ENCODE measurements at regions of chr11 and their contacts with region 1.

Region 1: DNA sequence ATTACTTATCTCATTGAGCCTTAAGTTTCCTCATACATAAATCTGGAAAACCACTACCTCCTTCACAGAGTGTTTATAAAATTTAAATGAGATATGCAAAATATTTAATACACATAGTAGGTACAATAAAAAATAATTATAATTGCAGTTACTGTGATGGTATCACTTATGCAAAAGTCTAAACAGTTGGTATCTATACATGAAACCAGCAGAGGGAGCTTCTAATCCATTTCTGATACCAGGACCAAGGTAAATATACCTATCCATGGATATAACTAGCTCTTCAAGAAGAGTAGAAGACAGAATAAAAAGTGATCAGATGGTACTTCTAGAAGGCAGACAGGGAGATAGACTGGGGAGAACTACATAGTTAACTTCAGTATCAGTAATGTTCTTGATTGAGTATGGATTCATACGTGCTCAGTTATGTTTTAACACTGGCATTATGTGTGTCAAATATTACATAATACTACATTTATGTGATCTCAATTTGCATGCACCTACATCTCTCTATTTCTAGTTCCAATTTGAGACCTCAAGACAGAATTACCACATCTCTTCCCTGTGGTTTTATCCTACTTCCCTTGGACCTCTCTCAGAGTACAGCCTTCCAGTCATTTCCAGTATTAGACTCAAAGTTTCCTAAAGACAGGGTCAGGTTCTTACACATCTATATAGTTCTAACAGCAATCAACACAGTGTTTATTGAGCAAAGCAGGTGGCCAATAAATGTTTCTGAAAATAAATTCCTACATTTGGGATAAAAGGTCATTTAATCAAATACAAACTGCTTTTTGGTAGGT is 13.7 kb upstream of the TSG101 start:
- DNase-seq: no peak
- ATAC-seq: no peak

Region 2: GRCh38 chr11:18071098-18071705 is 469.2 kb before region 1 on chr11:
- intact Hi-C with region 1: no loop called
- DNase-seq: no peak
- ATAC-seq: no peak

Region 3: DNA sequence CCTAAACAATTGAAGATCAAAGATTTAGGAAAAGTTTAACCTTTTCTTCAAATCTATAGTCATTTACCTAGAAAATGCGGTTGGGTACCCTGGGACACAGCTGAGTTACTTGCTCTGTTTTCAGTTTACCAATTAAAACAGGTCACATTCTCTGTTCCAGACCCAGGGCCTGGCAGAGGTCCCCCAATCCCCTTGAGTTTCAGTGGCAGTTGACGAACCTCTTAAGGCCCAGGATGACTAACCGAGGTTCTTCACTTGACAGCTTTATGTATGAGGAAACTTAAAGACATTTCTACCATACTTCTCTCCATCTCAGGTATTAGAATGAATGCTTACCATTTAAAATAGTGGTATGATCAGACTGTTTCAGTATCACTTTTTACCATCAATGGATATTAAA is 68.4 kb before region 1 on chr11:
- intact Hi-C with region 1: no loop called
- DNase-seq: no peak
- ATAC-seq: no peak

Region 4: DNA sequence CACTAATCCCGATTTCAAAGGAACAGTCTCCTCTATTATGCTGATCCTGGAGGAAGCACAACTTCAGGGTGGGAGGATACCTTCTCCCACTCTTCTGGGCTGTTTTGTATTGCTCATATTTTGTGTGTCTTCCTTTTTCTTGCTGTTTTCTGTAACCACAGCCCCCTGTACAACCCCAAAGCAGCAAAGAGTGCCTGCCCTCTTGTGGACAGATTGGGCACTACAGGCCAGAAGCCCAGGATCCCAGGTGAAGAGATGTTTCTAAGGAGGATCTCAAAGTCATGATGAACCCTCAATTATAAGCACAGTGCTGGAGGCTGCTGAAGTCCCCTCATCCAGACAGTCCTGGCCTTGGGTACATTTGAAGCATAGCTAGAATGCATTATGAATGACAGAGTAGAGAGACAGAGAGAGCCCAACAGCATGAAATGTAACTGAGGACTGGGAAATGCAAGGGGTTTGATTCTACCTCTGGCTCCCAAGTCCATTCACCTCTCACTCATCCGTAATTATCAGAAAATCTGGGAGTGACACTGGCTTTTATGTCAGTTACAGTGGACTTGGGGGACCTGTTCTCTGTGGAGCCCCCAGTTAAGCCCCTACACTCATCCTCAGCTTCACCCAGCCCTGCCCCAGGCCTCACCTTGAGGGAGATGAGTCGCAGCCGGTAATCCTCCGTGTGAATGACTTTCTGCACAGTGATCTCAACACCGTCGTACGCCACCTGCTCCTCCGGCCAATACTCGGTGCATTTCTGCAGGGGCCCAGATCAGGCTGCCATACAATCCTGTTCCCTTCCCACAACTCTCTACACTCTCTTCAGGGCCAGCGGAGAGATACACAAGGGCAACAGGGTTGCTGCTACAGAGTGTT is 191.8 kb after region 1 on chr11:
- intact Hi-C with region 1: loop called (anchors 10 kb)
- DNase-seq: peak; percentile 59
- ATAC-seq: peak; percentile 71

Region 5: DNA sequence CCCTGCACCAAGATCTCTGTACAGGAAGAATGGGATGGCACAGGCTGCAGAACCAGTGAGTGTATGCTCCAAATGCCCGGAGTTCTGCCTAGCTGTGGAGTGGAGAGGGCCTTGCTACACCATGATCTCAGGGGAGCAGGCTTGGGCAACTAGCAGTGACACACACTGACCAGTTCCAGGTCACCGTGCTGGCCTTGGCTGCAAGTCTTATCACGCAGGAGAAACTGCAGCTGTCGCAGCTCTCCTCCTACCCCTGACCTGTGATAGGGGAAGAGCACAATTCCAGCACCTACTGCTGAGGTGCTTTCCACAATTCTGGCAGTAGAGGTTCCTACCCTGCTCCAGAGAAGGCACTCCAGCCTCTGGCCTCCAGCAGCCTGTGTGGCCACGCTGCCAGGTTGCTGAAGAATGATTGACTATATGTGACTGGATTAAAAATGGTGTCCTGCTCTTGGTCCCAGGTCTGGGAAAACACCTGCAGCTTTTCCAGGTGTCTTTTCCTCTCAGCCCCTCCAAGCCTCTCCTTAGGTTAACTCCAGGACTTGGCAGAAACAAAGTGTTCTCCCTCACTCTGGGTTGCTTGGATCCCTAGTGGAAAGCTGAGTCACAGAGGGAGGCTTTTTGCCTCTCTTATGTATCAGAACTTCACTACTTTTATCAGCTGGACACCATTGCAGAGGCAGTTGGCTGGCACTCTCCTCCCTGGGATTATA is 294.5 kb after region 1 on chr11:
- intact Hi-C with region 1: no loop called
- DNase-seq: no peak
- ATAC-seq: no peak

Measured in left ventricle myocardium superior (tissue), 1 donor.